Transverse colon (tissue), 4 donors: ENCODE measurements at regions of chr11 and their contacts with region 1.

Region 1: DNA sequence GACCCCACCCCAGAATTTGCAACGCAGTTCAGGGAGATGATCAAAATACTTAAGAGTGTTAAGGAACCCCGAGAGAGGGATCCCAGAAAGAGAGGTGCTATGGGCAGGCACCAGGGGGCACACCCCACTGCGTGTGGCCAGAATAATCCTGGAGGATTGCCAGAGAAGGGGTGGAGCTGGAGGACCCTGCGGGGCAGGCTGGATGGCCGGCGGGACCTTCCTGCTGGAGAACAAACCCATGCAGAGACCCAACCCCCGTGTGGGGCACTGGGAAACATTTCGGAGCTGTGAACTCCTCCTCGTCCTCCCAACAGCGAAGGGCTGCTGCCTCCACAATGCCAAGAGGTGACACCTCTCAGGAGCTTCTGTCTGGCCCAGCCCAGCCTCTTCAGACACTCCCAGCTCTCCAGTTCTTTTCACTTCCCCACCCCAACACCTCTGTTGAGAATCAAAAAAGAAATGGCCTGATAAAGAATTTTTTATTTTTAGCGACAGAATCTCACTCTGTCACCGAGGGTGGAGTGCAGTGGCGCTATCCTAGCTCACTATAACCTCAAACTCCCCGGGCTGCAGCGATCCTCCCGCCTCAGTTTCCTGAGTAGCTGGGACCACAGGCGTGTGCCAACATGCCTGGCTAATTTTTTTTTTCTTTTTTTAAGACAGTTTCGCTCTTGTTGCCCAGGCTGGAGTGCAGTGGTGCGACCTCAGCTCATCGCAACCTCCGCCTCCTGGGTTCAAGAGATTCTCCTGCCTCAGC is 25.6 kb downstream of the RHOD start:
- DNase-seq: peak; percentile 14
- H3K4me3 ChIP-seq: no peak overlapping the region
- H3K27ac ChIP-seq: no peak overlapping the region
- H3K4me1 ChIP-seq: peaks cover 5 to 28% (median 17%) of the 10 kb centered on the region in 4 donors
- H3K27me3 ChIP-seq: no peaks in the 10 kb centered on the region
- CTCF ChIP-seq: no peak
- EP300 ChIP-seq: no peak
- POLR2A ChIP-seq: no peak

Region 2: DNA sequence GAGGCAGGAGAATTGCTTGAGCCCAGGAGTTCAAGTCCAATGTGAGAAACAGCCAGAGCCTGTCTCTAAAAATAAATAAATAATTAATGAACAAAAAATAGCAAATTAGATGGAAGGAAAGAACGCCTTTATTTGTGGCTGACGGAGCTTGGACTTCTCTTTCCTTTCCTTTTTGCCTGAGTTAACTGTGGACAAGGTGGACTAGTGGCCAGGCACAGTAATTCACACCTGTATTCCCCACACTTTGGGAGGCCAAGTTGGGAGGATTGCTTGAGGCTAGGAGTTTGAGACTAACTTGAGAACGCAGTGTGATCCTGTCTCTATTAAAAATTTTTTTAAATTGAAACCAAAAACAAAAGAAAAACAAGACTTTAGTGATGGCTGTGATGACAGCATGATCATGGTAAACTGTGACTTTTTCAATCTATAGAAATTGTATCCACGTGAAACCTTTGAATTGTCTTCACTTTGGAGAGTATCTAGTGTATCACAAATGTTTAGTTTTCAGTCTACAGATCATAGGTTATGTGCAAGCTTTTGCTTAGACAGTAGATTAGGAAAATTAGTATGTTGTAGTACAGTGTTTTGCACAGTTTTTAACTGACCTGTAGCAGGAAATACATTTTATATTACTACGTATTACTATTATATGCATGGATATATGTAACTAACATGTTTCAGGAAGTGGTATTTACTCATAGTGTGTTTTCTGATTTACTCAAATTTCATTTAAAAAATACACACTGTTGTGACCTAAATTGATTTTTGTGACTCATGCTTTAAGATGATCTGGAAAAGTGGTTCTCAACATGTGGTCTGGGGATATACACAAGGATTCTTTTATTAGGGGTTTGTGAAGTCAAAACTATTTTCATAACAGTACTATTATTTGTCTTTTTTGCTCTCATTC is 78.9 kb after region 1 on chr11:
- in situ Hi-C with region 1: loop called in 2 of 4 experiments (anchors 5 kb)
- intact Hi-C with region 1: loop called (anchors 10 kb)
- DNase-seq: no peak
- H3K4me3 ChIP-seq: no peak overlapping the region
- H3K27ac ChIP-seq: no peak overlapping the region
- H3K4me1 ChIP-seq: peaks cover 0 to 21% (median 2%) of the 10 kb centered on the region in 4 donors
- H3K27me3 ChIP-seq: no peaks in the 10 kb centered on the region
- CTCF ChIP-seq: peak in 1 of 5 experiments; percentile 5
- EP300 ChIP-seq: no peak
- POLR2A ChIP-seq: no peak

Region 3: DNA sequence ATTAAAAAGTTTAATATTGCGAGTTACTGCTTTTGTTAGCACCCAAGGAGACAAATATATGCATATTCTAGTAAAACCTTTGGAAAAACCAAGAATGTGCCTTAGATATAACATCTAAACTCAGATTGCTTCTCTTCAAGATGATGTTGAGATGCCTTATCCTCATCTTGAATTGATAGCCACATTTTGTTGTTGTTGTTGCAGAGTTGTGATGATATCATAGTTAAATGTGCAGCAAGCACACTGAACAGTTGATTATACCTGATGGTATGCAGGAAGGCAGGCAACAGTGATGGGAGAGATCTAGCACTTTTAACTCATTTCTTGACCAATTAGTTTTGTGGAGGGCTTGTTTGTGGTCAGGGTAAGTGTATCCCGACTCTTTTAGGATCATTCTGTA is 84.9 kb after region 1 on chr11:
- in situ Hi-C with region 1: loop called in 2 of 4 experiments (anchors 5 kb)
- intact Hi-C with region 1: loop called (anchors 10 kb)
- DNase-seq: no peak
- H3K4me3 ChIP-seq: no peak overlapping the region
- H3K27ac ChIP-seq: no peak overlapping the region
- H3K4me1 ChIP-seq: peaks cover 5 to 15% (median 7%) of the 10 kb centered on the region in 4 donors
- H3K27me3 ChIP-seq: no peaks in the 10 kb centered on the region
- CTCF ChIP-seq: no peak
- EP300 ChIP-seq: no peak
- POLR2A ChIP-seq: no peak